H1 (cell line): ENCODE measurements at regions of chr6 and their contacts with region 1.

Region 1: GRCh38 chr6:45922728-45923351 is 92.8 kb downstream of the CLIC5 start:
- DNase-seq: peak; percentile 59 to 81
- H3K4me3 ChIP-seq: no peak overlapping the region
- H3K27ac ChIP-seq: no peak overlapping the region
- H3K4me1 ChIP-seq: peaks cover 3 to 13% (median 5%) of the 10 kb centered on the region in 4 experiments
- H3K27me3 ChIP-seq: peaks cover 0 to 3% (median 0%) of the 10 kb centered on the region in 4 experiments; a peak in 4 of 7 replicates
- CTCF ChIP-seq: peak; percentile 62 to 80 (median 79)
- EP300 ChIP-seq: no peak
- POLR2A ChIP-seq: no peak
- RAD21 ChIP-seq: peak; percentile 96 to 97

Region 2: GRCh38 chr6:45714741-45715507 is 207.9 kb before region 1 on chr6:
- CTCF ChIA-PET with region 1: interaction called, 15 read pairs
- POLR2A ChIA-PET with region 1: no interaction called
- DNase-seq: peak; percentile 49 to 75
- H3K4me3 ChIP-seq: no peak overlapping the region
- H3K27ac ChIP-seq: no peak overlapping the region
- H3K4me1 ChIP-seq: 0 out of 7 replicates have a peak, but pooled peaks cover 0 to 2% (median 0%) of the 10 kb centered on the region in 4 experiments
- H3K27me3 ChIP-seq: peaks cover 0 to 2% (median 0%) of the 10 kb centered on the region in 4 experiments; a peak in 1 of 7 replicates
- CTCF ChIP-seq: peak; percentile 3 to 86 (median 76)
- EP300 ChIP-seq: no peak
- POLR2A ChIP-seq: no peak
- RAD21 ChIP-seq: peak; percentile 98

Region 3: DNA sequence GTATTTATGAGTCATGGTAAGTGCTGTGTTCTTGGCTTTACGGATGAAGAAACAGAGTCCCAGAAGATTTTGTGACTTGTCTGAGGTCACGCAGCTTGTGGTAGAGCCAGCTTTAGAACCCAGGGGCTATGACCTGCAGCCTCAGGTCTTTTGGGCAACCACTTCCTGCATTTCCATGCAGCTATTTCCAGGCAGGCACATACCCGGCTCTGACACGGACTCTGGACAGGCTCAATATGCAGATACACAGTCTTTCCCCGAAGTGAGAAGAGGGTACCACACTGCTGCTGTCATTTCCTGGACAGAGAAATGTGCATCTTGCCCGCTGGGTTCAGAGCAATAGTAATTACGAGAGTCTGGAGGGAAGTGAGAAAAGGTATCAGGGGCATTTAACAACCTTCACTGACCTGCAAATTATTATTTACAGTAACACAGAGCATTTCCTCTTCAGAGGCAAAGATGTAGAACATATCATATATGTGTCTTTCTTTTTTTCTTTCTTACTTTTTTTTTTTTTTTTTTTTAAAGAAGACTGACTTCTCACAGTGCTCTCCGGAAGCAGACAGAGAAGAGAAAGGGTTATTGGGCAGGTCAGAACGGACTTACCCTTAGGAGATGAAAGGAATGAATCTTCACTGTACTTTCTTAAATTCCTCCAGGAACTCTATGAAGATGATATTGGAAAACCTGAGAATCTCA is 92.2 kb before region 1 on chr6:
- CTCF ChIA-PET with region 1: no interaction called
- POLR2A ChIA-PET with region 1: no interaction called
- DNase-seq: no peak
- H3K4me3 ChIP-seq: no peak overlapping the region
- H3K27ac ChIP-seq: no peak overlapping the region
- H3K4me1 ChIP-seq: no peaks in the 10 kb centered on the region
- H3K27me3 ChIP-seq: no peaks in the 10 kb centered on the region
- CTCF ChIP-seq: no peak
- EP300 ChIP-seq: no peak
- POLR2A ChIP-seq: no peak
- RAD21 ChIP-seq: no peak

Region 4: DNA sequence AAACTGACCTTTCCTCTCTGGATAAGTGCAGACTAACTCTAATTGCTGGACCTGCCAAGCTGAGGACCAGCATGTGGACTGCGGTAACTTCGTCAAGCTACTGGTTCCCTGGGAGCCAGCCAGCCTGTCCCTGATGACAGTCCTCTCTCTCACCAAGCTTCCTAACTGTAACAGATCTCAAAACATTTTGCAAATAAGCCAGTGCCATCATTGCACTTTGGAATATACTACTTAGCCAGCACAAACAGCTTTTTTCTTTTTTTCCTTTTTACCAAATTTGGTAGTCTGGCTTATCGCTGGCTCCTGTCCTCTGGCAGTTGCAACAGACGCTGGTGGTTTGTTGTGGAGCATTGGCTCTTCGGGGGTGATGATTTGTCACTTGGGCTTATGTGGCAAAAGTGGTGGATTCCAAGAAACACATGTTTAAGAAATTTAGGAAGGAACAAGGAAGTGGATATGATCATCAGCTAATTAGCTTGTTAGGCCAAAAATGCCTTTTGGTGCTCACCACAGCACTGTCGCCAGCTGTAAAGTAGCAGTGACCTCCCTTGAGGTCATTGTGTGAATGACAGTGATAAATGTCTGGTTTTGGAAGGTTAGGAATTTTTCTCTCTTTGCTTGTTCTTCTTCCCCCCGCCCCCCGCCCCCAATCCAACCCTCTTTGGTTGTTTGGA is 78.9 kb before region 1 on chr6:
- CTCF ChIA-PET with region 1: interaction called, 14 read pairs
- POLR2A ChIA-PET with region 1: no interaction called
- DNase-seq: no peak
- H3K4me3 ChIP-seq: no peak overlapping the region
- H3K27ac ChIP-seq: no peak overlapping the region
- H3K4me1 ChIP-seq: no peaks in the 10 kb centered on the region; a peak in 1 of 7 replicates
- H3K27me3 ChIP-seq: no peaks in the 10 kb centered on the region
- CTCF ChIP-seq: no peak
- EP300 ChIP-seq: no peak
- POLR2A ChIP-seq: no peak
- RAD21 ChIP-seq: no peak

Region 5: DNA sequence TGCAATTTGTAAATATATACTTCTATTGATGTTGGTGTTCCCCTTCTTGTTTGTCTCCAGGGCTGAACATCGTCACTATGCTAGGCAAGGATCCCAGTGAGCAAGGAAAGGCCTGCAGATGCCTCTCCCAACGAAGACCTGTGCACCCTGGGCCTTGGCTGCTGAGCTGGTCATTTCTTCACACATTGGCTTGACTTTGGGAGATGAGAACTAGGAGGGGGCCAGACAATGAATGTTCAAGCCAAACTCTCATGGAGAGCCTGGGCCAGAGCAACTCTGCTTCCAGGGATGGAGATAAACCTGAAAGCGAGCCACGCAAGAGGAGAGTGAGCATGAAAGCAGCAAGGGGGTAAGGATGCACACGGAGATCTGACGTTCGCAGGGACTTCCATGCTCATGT is 11.1 kb before region 1 on chr6:
- CTCF ChIA-PET with region 1: interaction called, 21 read pairs
- POLR2A ChIA-PET with region 1: no interaction called
- DNase-seq: no peak
- H3K4me3 ChIP-seq: no peak overlapping the region
- H3K27ac ChIP-seq: no peak overlapping the region
- H3K4me1 ChIP-seq: no peaks in the 10 kb centered on the region
- H3K27me3 ChIP-seq: no peaks in the 10 kb centered on the region
- CTCF ChIP-seq: no peak
- EP300 ChIP-seq: no peak
- POLR2A ChIP-seq: no peak
- RAD21 ChIP-seq: no peak